ENCODE measurements at regions of chr11 and their contacts with region 1.

Region 1: DNA sequence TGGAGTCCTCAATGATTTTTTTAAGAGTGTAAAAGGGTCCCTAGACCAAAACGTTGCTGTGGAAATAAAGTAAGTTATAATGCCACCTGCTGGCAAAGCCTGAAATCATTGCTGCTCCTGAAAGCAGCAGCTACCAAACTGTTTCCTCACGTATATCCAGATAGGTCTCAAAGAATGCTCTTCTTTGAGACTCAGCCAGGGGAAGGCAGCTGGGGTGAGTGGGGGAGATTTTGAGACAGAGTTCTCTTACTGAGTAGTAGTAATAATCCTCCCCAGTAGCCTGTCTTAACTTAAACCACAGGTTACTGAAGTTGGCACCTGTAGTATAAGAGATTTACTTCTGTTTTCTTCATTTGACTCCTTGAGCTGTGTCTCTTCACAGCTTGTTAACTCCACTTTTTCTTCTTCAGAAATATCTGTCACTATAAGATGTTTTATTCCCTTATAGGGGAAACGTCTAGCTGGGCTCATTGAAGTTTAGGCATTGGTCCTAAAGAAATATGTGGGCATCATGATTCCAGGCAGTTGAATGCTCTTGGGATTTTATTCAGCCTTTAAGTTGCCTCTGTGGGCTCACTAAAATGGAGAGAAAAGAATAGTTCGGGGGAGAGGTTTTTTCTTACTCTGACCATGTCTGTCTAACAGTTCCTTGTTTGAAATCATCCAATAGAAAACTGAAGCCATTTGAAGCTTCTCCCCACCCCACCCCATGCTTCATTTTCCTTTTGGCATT is 77.9 kb downstream of the BTBD10 start:
- DNase-seq: peak; percentile 41
- H3K4me3 ChIP-seq: no peak overlapping the region
- H3K27ac ChIP-seq: no peak overlapping the region
- H3K27me3 ChIP-seq: no peaks in the 10 kb centered on the region
- CTCF ChIP-seq: peak; percentile 78

Region 2: DNA sequence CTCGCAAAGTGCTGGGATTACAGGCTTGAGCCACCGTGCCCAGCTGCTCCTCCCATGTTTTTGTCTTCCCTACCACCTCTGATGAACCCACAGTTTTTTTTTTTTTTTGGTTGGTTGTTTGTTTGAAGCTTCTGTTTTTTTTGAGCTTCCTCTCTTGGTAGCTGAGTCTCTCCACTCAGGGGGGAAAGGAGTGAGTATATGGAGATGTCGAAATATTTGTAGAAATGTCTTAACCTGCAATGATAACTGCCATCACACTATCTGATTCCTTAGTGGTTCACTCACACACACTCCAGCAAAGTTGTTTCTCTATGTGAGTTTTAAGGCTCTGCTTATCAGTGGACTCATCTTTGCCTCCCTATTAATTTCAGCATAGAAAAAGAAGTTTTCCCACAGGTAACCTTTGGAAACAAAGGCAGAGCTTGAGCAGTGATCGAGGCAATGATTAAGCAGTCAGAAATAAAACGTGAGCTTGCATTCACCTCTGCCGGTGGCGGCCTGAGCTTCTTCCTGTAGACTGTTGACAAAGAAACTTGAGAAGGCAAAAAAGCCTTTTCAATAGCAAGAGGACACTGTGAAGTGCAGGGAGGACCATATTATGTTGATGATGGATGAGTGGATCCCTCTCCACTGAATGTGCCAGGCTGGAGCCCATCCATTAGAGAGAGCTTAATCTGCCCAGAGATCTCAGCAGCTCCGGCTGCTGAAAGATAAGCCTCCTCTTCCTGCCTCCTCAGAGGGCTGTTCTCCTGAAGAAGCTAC is 405.0 kb before region 1 on chr11:
- CTCF ChIA-PET with region 1: no interaction called
- POLR2A ChIA-PET with region 1: no interaction called
- DNase-seq: no peak
- H3K4me3 ChIP-seq: no peak overlapping the region
- H3K27ac ChIP-seq: no peak overlapping the region
- H3K27me3 ChIP-seq: peaks cover 51% of the 10 kb centered on the region
- CTCF ChIP-seq: no peak

Region 3: GRCh38 chr11:13216019-13216710 is 168.9 kb before region 1 on chr11:
- CTCF ChIA-PET with region 1: interaction called, 121 read pairs
- POLR2A ChIA-PET with region 1: interaction called, 3 read pairs
- DNase-seq: peak; percentile 87
- H3K4me3 ChIP-seq: peak overlapping the region; percentile 23; the same call in 1 of the 2 replicates
- H3K27ac ChIP-seq: peak overlapping the region; percentile 100
- H3K27me3 ChIP-seq: no peaks in the 10 kb centered on the region
- CTCF ChIP-seq: no peak

Region 4: GRCh38 chr11:13256216-13256615 is 128.9 kb before region 1 on chr11:
- CTCF ChIA-PET with region 1: no interaction called
- POLR2A ChIA-PET with region 1: no interaction called
- DNase-seq: no peak
- H3K4me3 ChIP-seq: no peak overlapping the region
- H3K27ac ChIP-seq: no peak overlapping the region
- H3K27me3 ChIP-seq: no peaks in the 10 kb centered on the region
- CTCF ChIP-seq: no peak

Region 5: GRCh38 chr11:13354335-13354734 is 30.7 kb before region 1 on chr11:
- CTCF ChIA-PET with region 1: interaction called, 26 read pairs
- POLR2A ChIA-PET with region 1: no interaction called
- DNase-seq: no peak
- H3K4me3 ChIP-seq: no peak overlapping the region
- H3K27ac ChIP-seq: no peak overlapping the region
- H3K27me3 ChIP-seq: no peaks in the 10 kb centered on the region
- CTCF ChIP-seq: peak; percentile 40

Region 6: GRCh38 chr11:13421561-13421960 is 36.5 kb after region 1 on chr11:
- CTCF ChIA-PET with region 1: interaction called, 11 read pairs
- POLR2A ChIA-PET with region 1: no interaction called
- DNase-seq: no peak
- H3K4me3 ChIP-seq: no peak overlapping the region
- H3K27ac ChIP-seq: no peak overlapping the region
- H3K27me3 ChIP-seq: no peaks in the 10 kb centered on the region
- CTCF ChIP-seq: no peak

Region 7: DNA sequence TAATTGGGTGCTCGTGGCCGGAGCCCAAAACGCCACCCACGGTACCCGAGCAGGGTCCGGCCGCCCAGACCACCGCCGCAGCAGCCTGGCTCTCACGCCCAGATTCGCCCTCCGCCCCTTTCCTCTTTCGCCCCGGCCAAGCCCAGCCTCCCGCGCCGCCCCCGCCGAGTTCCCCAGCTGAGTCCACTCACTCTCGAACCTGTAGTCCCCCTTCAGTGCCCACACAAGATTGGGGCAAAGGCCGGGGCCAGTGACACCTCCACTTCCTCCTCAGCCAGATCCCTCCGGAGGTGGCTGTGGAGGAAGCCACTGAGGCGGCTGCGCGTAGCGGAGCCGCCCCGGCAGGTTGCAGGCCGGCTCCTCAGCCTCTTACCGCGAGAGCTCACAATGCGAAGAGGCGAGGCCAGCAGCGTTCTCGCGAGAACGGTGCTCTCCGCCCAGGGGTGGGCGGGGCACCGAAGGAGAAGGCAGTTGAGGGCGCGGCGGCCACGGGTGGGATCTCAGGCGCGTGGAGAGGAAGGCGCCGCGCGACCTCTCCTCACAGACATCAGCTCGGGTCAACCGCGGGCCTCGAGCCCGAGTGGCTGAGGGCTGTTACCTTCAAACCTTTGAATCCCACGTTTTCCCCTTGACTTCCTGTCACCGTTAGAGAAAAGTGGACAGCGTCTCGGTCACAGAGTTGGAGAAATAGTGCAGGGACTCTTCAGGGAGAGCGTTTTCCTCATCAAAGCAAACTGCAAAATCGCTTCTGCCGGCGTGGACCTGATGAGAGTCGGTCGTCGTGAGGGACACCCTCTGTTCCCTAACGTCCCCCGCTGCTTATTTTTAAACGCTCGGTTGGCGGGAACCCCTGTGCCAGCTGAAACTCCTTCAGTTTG is 78.1 kb after region 1 on chr11 and contains the start of gene BTBD10:
- CTCF ChIA-PET with region 1: interaction called, 14 read pairs
- POLR2A ChIA-PET with region 1: no interaction called
- DNase-seq: peak; percentile 88
- H3K4me3 ChIP-seq: peak within 1 kb of the TSS; percentile 86
- H3K27ac ChIP-seq: peak within 1 kb of the TSS; percentile 72
- H3K27me3 ChIP-seq: peaks cover 6% of the 10 kb centered on the region
- CTCF ChIP-seq: no peak
- polyA plus RNA-seq, gene BTBD10: 50.2 and 60.8 TPM in 2 replicates

Measured in AG04450 (cell line).